ENCODE measurements at regions of chr1 and their contacts with region 1.

Region 1: GRCh38 chr1:4494558-4494957 is 159.9 kb upstream of the AJAP1 start:
- DNase-seq: peak in 1 of 5 donors; percentile 47
- ATAC-seq: peak; percentile 32 to 78 (median 72)
- H3K4me3 ChIP-seq: no peak overlapping the region
- H3K27ac ChIP-seq: no peak overlapping the region
- H3K4me1 ChIP-seq: no peaks in the 10 kb centered on the region
- H3K27me3 ChIP-seq: peaks cover 0 to 20% (median 0%) of the 10 kb centered on the region in 9 donors
- CTCF ChIP-seq: peak in 10 of 12 donors; percentile 12 to 50 (median 31)
- POLR2A ChIP-seq: no peak

Region 2: GRCh38 chr1:4071653-4072052 is 422.9 kb before region 1 on chr1:
- intact Hi-C with region 1: no loop called
- DNase-seq: no peak
- ATAC-seq: no peak
- H3K4me3 ChIP-seq: no peak overlapping the region
- H3K27ac ChIP-seq: no peak overlapping the region
- H3K4me1 ChIP-seq: no peaks in the 10 kb centered on the region
- H3K27me3 ChIP-seq: peaks cover 0 to 38% (median 0%) of the 10 kb centered on the region in 9 donors
- CTCF ChIP-seq: no peak
- POLR2A ChIP-seq: no peak

Region 3: GRCh38 chr1:4517186-4517954 is 22.8 kb after region 1 on chr1:
- intact Hi-C with region 1: no loop called
- DNase-seq: no peak
- ATAC-seq: no peak
- H3K4me3 ChIP-seq: no peak overlapping the region
- H3K27ac ChIP-seq: no peak overlapping the region
- H3K4me1 ChIP-seq: peaks cover 0 to 21% (median 7%) of the 10 kb centered on the region in 12 donors
- H3K27me3 ChIP-seq: no peaks in the 10 kb centered on the region
- CTCF ChIP-seq: no peak
- POLR2A ChIP-seq: no peak

Region 4: GRCh38 chr1:4627353-4627752 is 132.8 kb after region 1 on chr1:
- intact Hi-C with region 1: loop called in 1 of 10 experiments (anchors 10 kb)
- DNase-seq: no peak
- ATAC-seq: no peak
- H3K4me3 ChIP-seq: no peak overlapping the region
- H3K27ac ChIP-seq: no peak overlapping the region
- H3K4me1 ChIP-seq: peaks cover 0 to 6% (median 0%) of the 10 kb centered on the region in 12 donors
- H3K27me3 ChIP-seq: peaks cover 0 to 18% (median 0%) of the 10 kb centered on the region in 9 donors
- CTCF ChIP-seq: no peak
- POLR2A ChIP-seq: no peak

Region 5: DNA sequence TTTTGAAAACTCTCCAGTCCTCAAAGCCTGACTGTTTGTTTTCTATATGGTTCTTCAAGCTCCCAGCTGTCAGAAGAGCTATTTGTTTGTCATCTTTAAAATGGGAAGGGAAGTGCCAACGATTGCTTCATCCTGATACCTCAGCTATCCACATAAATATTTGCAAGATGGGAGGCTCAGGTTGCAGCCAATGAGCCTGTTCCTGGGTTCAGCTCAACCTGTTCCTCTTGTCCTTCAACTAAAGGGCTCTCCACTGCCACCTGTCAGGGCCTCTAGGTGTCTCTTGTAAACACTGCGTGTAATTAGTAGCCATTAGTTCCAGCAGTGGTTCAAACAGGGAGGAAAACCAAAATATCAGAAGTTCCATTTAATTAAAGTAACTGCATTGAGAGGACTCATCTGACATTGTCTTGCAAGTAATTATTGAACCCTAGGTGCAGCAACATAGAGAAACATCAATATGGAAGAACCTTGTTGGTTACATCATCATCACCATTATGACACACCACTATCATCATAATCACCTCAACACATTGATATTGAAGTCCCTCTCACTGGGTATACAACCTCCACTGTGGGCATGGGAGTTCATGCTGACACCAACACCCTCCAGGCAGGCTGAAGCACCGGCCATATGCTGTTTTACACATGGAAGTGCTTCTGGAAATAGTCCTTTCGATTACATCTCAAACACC is 605.1 kb after region 1 on chr1:
- intact Hi-C with region 1: no loop called
- DNase-seq: no peak
- ATAC-seq: no peak
- H3K4me3 ChIP-seq: no peak overlapping the region
- H3K27ac ChIP-seq: no peak overlapping the region
- H3K4me1 ChIP-seq: no peaks in the 10 kb centered on the region
- H3K27me3 ChIP-seq: peaks cover 0 to 7% (median 0%) of the 10 kb centered on the region in 9 donors
- CTCF ChIP-seq: no peak
- POLR2A ChIP-seq: no peak

Region 6: GRCh38 chr1:5423109-5423508 is 928.6 kb after region 1 on chr1:
- intact Hi-C with region 1: no loop called
- DNase-seq: no peak
- ATAC-seq: no peak
- H3K4me3 ChIP-seq: no peak overlapping the region
- H3K27ac ChIP-seq: no peak overlapping the region
- H3K4me1 ChIP-seq: peaks cover 0 to 5% (median 0%) of the 10 kb centered on the region in 12 donors
- H3K27me3 ChIP-seq: peaks cover 3 to 63% (median 13%) of the 10 kb centered on the region in 9 donors
- CTCF ChIP-seq: no peak
- POLR2A ChIP-seq: no peak